AG04449 (cell line): ENCODE measurements at regions of chr18 and their contacts with region 1.

Region 1: DNA sequence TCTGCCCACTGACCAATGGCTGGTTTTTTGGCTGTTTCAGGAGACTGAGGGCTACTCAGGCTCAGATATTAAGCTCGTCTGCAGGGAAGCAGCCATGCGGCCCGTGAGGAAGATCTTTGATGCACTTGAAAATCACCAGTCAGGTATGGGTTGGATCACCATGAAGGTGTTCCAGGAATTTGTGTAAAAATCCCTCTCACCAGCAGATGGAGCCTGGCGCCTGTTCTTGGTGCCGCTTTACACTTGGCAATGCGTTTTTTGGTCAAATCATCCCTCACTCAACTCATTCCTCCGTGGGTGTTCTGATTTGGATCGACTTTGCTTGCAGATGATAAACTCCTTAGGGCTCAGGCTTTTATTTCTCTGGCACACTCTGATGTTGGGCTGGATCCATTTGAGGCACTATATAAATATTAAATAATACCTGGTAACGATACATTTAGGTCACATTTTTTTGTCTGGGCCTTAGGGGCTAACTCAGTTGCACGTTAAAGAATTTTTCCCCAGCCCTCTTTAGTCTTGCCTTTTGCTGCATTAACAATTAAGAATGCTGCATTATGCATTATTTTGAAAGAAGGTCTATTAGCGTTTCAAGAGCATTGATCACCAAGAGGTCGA is 50.0 kb downstream of the HDHD2 start:
- DNase-seq: no peak
- H3K4me3 ChIP-seq: no peak overlapping the region
- CTCF ChIP-seq: peak; percentile 75

Region 2: DNA sequence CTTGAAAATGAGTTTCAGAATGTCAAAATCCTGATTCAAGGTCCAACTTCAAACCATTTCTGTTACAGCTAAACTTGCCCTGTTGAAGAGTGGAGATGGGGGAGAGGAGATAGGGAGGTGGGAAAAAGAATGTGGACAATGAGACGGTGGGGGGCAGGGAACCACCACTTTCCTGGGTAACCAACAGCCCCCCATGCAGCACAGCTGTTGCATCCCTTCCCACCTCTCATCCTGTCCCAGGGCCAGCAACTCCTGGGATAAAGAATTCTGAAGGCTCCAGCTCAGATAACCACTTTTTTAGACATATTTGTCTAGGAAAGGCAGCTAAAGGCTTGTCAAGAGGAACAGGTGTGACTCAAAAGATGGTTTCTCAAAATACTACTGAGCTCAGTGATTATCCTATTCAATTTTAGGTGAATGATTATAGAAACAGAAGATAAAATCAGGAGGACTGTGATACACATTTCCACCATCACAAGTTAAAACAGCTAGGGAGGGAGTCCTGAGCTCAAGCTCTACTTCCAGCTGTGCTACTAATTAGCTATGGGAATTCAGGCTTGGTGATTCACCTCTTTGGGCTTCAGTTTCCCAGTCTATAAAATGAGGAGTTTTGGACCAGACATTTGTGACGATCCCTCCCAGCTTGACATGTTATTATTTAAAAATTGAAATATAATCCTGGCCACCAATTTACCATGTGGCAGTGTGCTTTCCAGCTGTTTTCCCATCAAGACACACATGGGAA is 13.6 kb after region 1 on chr18:
- CTCF ChIA-PET with region 1: interaction called, 51 read pairs
- POLR2A ChIA-PET with region 1: no interaction called
- DNase-seq: no peak
- H3K4me3 ChIP-seq: no peak overlapping the region
- CTCF ChIP-seq: no peak

Region 3: DNA sequence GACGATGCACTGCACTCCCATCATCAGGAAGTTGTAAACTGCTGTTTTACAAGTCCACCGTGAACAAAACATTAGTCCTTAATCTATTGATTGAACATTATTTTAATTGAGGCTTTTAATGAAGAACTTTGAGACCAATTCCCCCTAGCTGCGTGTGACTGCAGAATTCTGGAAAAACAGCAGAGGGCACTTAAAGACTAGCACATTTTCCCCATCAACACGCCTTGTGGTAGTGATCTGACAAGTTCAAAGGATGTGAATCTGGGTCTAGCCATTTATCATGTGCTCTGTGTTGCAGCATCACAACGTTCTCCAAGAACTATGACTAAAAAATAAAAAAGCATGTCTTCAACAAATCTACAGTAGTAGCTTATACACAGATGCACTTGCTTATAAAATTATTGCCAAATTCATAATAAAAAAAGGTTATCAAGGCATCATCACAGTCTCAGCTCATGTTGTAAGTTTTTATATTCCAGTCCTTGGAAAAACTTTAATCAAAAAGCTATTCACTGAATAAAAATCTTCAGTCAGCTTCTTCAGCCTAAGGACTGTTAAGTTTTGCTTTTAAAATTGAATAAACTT is 115.3 kb after region 1 on chr18:
- CTCF ChIA-PET with region 1: interaction called, 15 read pairs
- POLR2A ChIA-PET with region 1: no interaction called
- DNase-seq: peak; percentile 33
- H3K4me3 ChIP-seq: no peak overlapping the region
- CTCF ChIP-seq: peak; percentile 58